ENCODE measurements at regions of chr17 and their contacts with region 1.

Region 1: DNA sequence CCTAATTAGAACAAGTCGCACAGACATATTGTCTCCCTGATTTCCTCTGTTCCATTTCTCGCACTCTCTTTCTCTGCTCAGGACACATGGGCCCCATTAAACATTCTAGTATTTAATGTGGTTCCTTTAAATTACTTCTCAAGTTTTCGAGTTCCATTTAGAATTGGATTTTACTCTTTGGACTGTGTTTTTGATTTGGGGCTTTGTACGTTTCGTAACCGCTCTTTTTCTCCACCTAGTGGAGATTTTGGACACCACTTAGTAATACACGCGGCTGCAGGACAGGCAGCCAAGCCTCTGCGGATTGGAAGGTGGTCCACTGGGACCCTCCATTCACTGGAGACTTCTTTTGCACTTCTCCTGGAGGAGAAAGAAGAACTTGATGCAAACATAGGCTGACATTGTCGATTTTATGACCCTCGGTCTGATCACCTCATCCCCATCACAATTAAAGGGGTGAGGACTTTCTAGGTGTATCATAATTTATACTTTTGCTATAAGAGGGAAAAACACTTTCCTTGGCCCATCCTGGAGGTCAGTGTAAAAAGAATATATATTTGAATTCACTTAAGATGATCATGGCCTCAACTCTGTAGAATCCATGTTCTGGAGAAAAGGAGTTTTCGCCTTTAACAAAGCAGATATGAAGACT is 85.7 kb downstream of the NOG start:
- DNase-seq: peak; percentile 23
- H3K4me3 Mint-ChIP-seq: no peak overlapping the region
- H3K27ac Mint-ChIP-seq: no peak overlapping the region
- H3K4me1 Mint-ChIP-seq: peaks cover 19% of the 10 kb centered on the region
- H3K27me3 Mint-ChIP-seq: no peaks in the 10 kb centered on the region
- CTCF ChIP-seq: no peak

Region 2: GRCh38 chr17:56648806-56649205 is 30.4 kb before region 1 on chr17:
- CTCF ChIA-PET with region 1: no interaction called
- POLR2A ChIA-PET with region 1: no interaction called
- intact Hi-C with region 1: no loop called
- DNase-seq: peak; percentile 43
- H3K4me3 Mint-ChIP-seq: no peak overlapping the region
- H3K27ac Mint-ChIP-seq: no peak overlapping the region
- H3K4me1 Mint-ChIP-seq: peaks cover 9% of the 10 kb centered on the region
- H3K27me3 Mint-ChIP-seq: no peaks in the 10 kb centered on the region
- CTCF ChIP-seq: no peak

Region 3: DNA sequence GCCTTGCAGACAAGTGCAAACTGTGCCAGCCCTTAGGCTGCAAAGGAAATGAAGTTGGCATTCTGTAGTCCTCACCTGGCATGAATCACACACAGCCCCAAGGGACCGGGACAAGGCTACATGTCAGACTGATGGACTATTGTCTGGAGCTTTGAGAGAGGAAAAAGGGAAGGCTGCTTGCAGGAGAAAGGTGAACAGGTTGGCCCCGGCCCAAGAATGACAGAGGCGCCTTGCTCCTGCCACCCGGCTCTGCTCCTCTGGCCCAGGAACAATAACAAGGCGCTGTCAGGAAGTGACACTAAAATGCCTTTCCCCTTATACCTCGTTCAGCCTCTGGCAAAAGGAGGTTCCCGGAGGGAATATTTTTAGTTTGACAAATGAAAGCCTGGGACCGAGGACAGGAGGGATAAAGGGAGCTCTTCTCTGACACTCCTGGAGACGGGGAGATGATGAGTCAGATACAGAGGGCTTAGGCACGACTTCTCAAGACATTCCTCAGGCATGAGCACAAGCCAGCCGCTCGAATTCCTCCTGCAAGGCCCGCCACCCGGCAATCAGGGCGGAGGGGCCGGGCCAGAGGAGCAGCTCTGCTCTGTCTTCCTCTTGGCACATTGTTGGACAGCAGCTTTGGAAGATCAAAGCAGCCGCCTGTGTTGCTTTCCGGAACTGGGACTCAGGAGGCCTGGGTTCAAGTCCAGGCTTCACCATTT is 20.1 kb after region 1 on chr17:
- CTCF ChIA-PET with region 1: interaction called, 5 read pairs
- POLR2A ChIA-PET with region 1: interaction called, 13 read pairs
- intact Hi-C with region 1: no loop called
- DNase-seq: peak; percentile 98
- H3K4me3 Mint-ChIP-seq: peak overlapping the region; percentile 67
- H3K27ac Mint-ChIP-seq: peak overlapping the region; percentile 70
- H3K4me1 Mint-ChIP-seq: peaks cover 14% of the 10 kb centered on the region
- H3K27me3 Mint-ChIP-seq: no peaks in the 10 kb centered on the region
- CTCF ChIP-seq: no peak

Measured in MCF 10A (cell line).